ENCODE measurements at regions of chr11 and their contacts with region 1.

Region 1: DNA sequence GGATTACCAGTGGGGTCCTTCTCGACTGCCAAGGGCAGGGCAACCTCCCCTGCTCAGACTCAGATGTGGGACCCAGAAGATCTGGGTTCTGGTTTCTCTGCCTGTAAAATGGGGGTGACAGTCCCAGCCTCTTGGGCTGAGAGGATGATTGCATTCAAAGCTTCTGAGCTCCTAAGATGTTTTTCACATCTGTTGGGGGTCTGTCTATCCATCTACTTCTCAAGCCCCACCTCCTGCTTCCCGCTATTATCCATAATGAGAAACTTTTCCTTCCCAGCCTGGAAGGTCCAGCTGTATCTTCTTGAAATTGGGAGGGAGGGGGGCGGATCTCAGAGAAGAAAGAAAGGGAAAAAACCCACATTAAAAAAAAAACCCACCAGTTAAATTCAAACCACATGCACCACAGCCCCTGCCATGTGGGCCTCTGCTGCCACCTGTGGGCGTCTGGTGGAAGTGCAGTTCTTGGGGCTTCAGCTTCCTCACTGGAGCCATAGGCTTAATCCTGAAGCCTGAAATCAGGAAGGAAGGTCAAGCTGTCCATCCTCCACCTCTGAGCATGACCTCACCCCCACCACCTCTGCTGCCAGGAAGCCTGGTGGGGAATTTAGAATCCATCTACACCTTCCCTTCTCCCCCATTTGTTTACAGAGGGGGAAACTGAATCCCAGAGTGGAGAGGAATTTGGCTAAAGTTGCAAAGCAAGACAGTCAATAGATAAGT is 27.3 kb downstream of the ARHGEF17 start:
- DNase-seq: peak; percentile 83
- H3K4me3 Mint-ChIP-seq: no peak overlapping the region
- H3K27ac Mint-ChIP-seq: no peak overlapping the region
- H3K4me1 Mint-ChIP-seq: no peaks in the 10 kb centered on the region
- H3K27me3 Mint-ChIP-seq: peaks cover 36% of the 10 kb centered on the region

Region 2: DNA sequence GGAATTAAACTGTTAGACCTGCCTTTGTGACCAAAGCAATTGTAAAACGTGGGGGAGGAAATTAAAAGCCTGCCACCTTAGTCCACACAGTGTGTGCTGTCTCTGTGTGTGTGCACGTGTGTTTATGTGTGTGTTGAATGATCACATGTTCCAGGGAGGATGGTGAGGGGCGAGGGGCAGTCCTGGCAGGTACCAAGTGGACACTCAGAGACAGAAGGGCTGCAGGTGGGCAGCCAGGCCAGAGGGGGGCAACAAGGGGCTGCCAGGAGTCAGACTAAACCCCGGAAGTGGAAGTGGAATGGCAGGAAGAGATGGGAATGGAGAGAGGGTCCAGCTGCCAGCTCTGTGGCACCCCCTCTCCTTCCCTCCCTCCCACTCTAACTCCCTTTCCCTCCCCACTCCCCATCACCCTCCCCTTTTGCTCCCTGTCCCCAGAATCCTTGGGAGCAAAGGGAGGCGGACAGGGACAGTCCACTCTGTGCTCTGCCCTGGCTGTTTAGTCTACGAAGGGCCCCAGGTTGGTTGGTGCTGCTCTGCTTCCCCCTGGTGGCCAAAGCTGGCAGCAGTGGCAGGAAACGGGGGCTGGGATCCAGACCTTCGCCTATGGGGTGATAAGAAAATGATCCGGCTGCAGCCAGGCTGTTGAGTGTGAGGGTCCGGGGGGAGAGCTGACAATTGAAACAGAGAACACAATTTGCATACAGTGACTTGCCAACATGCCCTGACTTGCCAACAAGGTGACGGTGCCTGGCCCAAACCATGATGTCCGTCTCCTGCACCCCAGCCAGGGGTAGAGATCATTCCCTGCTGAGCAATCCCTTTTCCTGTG is 92.9 kb before region 1 on chr11:
- CTCF ChIA-PET with region 1: no interaction called
- DNase-seq: peak; percentile 74
- H3K4me3 Mint-ChIP-seq: no peak overlapping the region
- H3K27ac Mint-ChIP-seq: no peak overlapping the region
- H3K4me1 Mint-ChIP-seq: peaks cover 6% of the 10 kb centered on the region
- H3K27me3 Mint-ChIP-seq: peaks cover 51% of the 10 kb centered on the region

Region 3: DNA sequence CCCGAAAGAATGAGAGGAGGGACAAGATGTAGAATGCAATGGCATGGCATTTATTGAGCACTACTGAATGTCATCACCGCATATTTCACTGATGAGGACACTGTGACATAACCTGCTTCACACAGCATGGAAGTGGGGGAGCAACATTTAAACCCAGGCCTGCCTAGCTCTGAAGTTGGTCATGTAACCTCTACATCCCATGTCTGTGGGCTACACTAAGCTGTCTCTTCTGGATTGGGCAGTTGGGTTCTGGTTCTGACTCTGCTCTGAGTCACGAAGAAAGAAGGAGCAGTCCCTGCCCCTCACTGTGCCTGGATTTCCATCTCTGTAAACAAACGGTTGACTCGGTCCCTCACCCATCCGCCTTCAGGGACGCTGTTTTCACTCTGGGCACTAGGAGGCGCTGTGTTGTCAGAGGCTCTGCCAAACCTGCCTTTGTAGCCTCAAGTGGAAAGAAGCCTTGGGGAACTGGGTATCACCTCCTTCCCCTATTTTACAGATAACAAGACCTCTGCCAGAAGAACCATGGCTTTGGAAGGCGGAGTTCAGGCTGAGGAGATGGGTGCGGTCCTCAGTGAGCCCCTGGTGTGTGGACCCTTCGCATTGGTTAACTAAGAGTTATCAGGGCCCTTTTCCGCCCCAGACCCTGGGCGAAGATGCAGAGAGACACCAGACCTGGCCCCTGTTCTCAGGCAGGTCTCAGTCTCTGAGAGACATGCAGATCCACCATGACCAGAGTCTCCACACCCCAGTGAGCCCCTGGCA is 40.0 kb before region 1 on chr11:
- CTCF ChIA-PET with region 1: interaction called, 51 read pairs
- DNase-seq: peak; percentile 87
- H3K4me3 Mint-ChIP-seq: no peak overlapping the region
- H3K27ac Mint-ChIP-seq: no peak overlapping the region
- H3K4me1 Mint-ChIP-seq: no peaks in the 10 kb centered on the region
- H3K27me3 Mint-ChIP-seq: peaks cover 68% of the 10 kb centered on the region

Region 4: DNA sequence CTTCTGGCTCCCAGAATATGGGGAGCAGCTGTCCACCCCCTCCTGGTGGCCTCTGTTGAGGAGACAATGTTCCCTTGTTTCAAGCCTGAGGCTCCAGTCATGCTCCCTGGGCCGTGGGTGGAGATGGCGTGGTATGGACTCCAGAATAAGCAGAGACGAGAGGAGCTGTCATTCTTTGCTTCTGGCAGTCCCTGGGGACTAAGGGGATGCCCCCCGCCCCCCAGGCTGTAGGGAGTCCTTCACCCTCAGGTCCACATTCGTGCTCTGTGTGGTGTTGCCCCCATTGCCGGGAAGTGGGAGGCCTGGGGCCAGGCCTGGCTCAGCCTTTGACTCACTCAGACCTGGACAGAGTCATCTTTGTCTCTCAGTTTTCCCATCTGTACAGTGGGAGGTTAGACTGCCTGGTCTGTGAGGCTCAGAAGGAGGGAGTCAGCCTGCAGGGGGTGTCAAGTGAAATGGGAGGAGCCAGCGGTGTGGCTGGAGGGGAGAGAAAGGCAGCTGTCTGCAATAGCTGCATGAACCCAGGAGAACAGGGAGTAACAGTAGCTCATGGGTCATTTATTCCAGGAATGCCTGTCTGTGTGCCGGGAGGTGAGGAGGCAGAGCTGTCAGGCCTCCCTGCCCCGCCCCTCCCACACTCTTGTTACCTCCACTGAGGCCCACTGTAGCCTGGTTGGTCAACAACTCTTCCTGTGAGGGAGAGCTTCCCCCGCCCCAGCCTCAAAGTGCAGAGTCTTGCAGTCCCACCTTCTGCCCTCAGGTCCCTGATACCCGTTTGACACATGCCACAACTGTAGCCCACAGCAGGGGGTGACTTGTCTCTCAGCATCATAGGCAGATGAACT is 21.0 kb before region 1 on chr11:
- CTCF ChIA-PET with region 1: interaction called, 101 read pairs
- DNase-seq: no peak
- H3K4me3 Mint-ChIP-seq: no peak overlapping the region
- H3K27ac Mint-ChIP-seq: no peak overlapping the region
- H3K4me1 Mint-ChIP-seq: peaks cover 14% of the 10 kb centered on the region
- H3K27me3 Mint-ChIP-seq: peaks cover 78% of the 10 kb centered on the region

Region 5: GRCh38 chr11:73350908-73351636 is 15.7 kb after region 1 on chr11:
- CTCF ChIA-PET with region 1: interaction called, 30 read pairs
- DNase-seq: peak; percentile 70
- H3K4me3 Mint-ChIP-seq: no peak overlapping the region
- H3K27ac Mint-ChIP-seq: no peak overlapping the region
- H3K4me1 Mint-ChIP-seq: peaks cover 17% of the 10 kb centered on the region
- H3K27me3 Mint-ChIP-seq: peaks cover 41% of the 10 kb centered on the region

Measured in activated naive CD4-positive, alpha-beta T cell treated with anti-CD3 and anti-CD28 coated beads, Interleukin-2, amount 10 ng/mL, durations not matched to agents 7 days and 5 days (primary cell).